Natural killer cell (primary cell): ENCODE measurements at regions of chr1 and their contacts with region 1.

Region 1: DNA sequence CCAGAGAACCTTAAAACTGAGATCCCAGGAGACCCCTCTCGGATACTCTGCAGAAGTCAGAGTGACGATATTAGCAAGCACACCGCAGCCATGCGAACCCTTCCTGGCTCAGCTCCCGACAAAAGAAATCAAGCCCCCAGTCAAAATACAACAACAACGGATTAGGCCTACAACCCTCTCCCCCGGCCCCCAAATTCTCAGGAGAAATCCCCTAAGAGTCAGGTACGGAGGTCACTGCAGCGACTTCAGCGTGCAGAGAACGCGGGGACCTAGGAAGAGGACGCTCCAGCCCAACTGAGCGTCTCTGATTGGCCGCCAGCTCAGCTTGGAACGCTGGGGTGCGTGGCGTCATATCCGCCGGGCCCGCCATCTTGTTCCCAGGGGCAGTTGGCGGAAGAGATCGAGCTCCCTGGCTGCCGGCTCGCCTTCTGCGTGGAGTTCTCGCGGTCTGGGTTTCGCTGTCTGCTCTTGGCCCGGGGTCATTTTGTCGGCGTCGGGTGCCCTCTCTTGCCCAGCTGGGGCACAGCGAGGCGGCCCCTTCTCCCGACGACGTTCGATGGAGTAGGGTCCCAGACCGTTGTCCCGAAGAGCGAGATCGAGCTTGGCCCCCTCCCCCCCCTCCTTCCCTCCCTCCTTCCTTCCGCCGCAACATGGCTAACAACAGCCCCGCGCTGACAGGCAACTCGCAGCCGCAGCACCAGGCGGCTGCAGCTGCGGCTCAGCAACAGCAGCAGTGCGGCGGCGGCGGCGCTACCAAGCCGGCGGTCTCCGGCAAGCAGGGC is at the start of gene PRPF38B:
- DNase-seq: peak; percentile 93 to 96
- ATAC-seq: peak; percentile 82 to 93 (median 84)
- H3K4me3 ChIP-seq: peak within 1 kb of the TSS; percentile 86
- H3K4me3 Mint-ChIP-seq: peak within 1 kb of the TSS; percentile 97
- H3K27ac ChIP-seq: peak within 1 kb of the TSS; percentile 99
- H3K27ac Mint-ChIP-seq: peak within 1 kb of the TSS; percentile 98 to 100
- H3K4me1 ChIP-seq: peaks cover 15% of the 10 kb centered on the region
- H3K4me1 Mint-ChIP-seq: peaks cover 47 to 53% of the 10 kb centered on the region in 2 donors
- H3K27me3 ChIP-seq: no peaks in the 10 kb centered on the region
- H3K27me3 Mint-ChIP-seq: no peaks in the 10 kb centered on the region
- CTCF ChIP-seq: no peak
- total RNA-seq, gene PRPF38B: 115 to 158 (median 156) TPM

Region 2: DNA sequence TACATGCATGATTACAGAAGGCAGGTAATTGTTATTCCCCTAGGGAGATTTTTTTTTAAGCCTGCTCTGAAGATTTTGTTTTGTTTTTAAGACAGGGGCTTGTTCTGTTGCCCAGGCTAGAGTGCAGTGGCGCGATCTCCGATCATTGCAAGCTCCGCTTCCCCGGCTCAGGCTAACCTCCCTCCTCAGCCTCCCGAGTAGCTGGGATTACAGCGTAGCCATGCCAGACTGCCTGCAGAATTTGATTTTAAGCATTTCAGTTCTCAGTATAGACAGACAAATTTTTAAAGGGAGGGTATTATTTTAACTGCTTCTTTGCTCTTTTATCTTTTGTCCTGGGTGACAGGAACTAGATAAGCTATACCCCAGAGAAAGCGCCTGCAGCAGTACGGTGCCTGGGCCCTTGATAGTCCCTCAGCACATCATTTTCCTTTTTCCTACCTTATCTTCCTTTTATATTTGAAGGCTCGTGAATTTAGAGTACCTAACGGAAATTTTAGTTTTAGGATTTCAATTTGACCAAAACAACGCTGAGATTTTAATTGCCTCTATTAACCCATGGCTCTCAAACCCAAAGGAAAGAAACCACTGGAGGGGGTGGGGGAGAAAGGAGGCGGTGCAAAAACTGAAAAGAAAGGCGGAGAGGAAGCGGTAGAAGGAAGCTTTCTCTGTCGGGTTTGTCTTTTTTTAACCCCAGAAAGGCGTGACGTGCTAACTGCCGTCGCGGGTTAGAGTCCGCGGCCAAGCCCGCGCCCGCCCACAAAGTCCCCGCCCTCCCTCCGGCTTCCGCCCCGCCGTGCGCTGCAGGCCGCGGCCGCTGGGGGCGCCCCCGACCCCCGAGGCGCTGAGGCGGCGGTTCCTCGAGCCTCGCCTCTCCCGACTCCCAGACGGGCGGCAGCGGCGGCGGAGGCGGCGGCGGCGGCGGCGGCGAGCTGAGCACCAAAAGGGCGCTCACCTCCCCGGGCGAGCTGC is 132.6 kb before region 1 on chr1 and contains the start of gene EEIG2:
- intact Hi-C with region 1: loop called (anchors 5 kb)
- DNase-seq: peak; percentile 85 to 95
- ATAC-seq: peak; percentile 88 to 95 (median 91)
- H3K4me3 ChIP-seq: peak within 1 kb of the TSS; percentile 74
- H3K4me3 Mint-ChIP-seq: peak within 1 kb of the TSS; percentile 95
- H3K27ac ChIP-seq: peak within 1 kb of the TSS; percentile 52
- H3K27ac Mint-ChIP-seq: peak within 1 kb of the TSS; percentile 86 to 88
- H3K4me1 ChIP-seq: peaks cover 28% of the 10 kb centered on the region
- H3K4me1 Mint-ChIP-seq: peaks cover 30% of the 10 kb centered on the region in 2 donors
- H3K27me3 ChIP-seq: no peaks in the 10 kb centered on the region
- H3K27me3 Mint-ChIP-seq: no peaks in the 10 kb centered on the region
- CTCF ChIP-seq: peak; percentile 74
- total RNA-seq, gene EEIG2: 18.2 to 23.9 (median 20.3) TPM

Region 3: DNA sequence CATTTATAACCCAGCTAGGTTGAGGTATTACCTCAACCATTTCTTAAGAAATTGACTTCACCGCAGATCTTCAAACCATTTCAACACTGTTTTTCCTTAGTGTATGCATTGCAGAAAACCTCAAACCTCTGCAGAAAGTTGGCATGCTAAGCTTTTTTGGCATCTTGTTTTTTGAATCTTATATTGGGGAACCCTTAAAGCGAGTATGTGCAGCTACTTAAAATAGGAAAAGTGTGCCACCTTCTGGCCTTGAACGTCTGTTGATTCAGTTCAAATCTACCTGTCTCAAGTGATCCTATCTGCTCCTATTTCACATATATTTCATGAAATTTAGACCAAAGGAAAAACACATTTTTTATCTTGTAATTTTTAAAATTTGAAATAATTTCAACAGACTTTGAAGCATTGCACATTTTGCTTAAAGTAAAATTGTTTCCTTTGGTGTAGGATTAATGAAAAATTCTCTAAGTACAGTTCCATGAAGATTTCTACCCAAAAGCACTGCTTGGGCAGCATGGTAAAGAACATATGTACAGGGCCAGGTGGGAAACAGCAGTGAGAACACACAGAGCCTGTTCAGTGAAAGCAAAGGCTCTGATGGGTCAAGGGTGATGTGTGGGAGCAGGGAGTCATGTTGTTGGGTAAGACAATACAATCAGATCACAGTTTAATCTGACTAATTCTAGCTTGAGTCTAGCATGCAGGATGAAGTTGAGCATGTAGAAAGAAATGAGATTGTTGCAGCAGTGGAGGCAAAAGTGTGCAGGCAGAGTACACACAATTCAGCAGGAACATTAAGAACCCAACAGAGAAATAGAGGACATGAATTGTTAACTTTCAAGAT is 48.4 kb before region 1 on chr1:
- intact Hi-C with region 1: loop called (anchors 1 kb)
- DNase-seq: peak in 1 of 2 donors; percentile 86
- ATAC-seq: no peak
- H3K4me3 ChIP-seq: no peak overlapping the region
- H3K4me3 Mint-ChIP-seq: peak overlapping the region; percentile 57
- H3K27ac ChIP-seq: peak overlapping the region; percentile 96
- H3K27ac Mint-ChIP-seq: peak overlapping the region; percentile 98
- H3K4me1 ChIP-seq: peaks cover 72% of the 10 kb centered on the region
- H3K4me1 Mint-ChIP-seq: peaks cover 78 to 79% of the 10 kb centered on the region in 2 donors
- H3K27me3 ChIP-seq: no peaks in the 10 kb centered on the region
- H3K27me3 Mint-ChIP-seq: no peaks in the 10 kb centered on the region
- CTCF ChIP-seq: peak; percentile 69

Region 4: DNA sequence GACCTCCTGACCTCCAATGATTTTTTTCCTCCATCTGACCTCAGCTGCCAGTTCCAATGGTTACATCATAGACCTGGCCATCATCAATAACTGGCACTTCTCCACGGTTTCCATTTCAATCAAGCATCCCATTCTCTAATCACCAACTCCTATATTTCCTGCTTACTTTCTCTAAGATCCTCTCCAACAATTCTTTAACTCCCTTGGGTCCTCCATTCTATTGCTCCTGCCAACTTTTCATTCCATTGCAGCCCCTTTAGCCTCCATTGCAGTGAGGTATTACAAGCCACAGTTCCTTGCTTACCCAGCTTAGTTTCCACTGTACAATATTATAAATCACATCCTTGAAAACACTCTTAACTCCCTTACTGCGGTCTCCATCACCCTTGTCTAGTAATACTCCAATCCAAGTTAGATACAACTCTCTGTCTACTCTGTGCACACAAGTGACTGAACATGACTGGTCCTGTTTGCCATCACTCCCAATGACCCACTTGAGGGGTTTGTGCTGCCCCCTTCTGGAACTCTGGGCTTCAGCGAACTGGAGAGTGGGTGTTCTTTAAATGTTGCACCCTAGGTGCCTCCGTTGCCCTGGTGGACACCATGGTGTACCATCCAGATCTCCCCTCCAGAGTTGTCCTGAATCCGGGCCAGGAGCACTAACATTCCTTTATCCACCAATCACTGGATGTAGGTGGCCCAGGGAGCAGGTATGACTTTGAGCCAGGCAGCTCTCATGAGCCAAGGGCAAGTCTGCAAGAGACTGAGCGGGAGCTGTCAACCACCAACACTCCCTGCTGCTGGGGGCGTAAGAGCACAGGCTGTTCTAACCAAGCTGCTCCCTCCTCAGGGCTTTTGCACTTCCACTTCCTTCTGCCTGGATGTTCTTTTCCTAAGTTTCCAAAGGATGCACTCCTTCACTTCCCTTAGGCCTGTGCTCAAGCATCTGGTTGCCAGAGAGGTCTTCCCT is 16.8 kb after region 1 on chr1:
- intact Hi-C with region 1: loop called (anchors 2 kb)
- DNase-seq: peak; percentile 48 to 81
- ATAC-seq: peak; percentile 72 to 90 (median 87)
- H3K4me3 ChIP-seq: no peak overlapping the region
- H3K4me3 Mint-ChIP-seq: no peak overlapping the region
- H3K27ac ChIP-seq: no peak overlapping the region
- H3K27ac Mint-ChIP-seq: peak overlapping the region in 1 of 2 donors; percentile 35
- H3K4me1 ChIP-seq: peaks cover 11% of the 10 kb centered on the region
- H3K4me1 Mint-ChIP-seq: peaks cover 17 to 25% of the 10 kb centered on the region in 2 donors
- H3K27me3 ChIP-seq: no peaks in the 10 kb centered on the region
- H3K27me3 Mint-ChIP-seq: no peaks in the 10 kb centered on the region
- CTCF ChIP-seq: peak; percentile 53

Region 5: DNA sequence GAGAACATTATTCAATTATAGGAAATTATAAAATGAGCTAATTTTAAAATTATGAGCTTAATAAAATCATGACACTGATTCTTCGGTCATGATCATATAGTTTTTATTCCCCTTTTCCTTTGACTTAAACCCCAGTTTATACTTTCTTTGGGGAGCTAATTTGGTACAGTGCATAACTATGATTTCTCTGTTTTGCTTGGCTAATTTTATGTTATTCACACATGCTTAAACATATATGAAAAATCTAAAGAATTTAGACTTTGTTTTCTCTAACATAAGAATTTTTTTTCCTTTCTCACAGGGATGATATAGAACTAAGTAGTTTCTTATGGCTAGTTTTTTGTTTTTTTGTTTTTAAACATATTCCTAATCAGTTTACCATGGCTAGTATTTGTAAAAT is 106.9 kb after region 1 on chr1:
- intact Hi-C with region 1: no loop called
- DNase-seq: no peak
- ATAC-seq: no peak
- H3K4me3 ChIP-seq: no peak overlapping the region
- H3K4me3 Mint-ChIP-seq: no peak overlapping the region
- H3K27ac ChIP-seq: no peak overlapping the region
- H3K27ac Mint-ChIP-seq: no peak overlapping the region
- H3K4me1 ChIP-seq: no peaks in the 10 kb centered on the region
- H3K4me1 Mint-ChIP-seq: no peaks in the 10 kb centered on the region
- H3K27me3 ChIP-seq: no peaks in the 10 kb centered on the region
- H3K27me3 Mint-ChIP-seq: no peaks in the 10 kb centered on the region
- CTCF ChIP-seq: no peak

Region 6: DNA sequence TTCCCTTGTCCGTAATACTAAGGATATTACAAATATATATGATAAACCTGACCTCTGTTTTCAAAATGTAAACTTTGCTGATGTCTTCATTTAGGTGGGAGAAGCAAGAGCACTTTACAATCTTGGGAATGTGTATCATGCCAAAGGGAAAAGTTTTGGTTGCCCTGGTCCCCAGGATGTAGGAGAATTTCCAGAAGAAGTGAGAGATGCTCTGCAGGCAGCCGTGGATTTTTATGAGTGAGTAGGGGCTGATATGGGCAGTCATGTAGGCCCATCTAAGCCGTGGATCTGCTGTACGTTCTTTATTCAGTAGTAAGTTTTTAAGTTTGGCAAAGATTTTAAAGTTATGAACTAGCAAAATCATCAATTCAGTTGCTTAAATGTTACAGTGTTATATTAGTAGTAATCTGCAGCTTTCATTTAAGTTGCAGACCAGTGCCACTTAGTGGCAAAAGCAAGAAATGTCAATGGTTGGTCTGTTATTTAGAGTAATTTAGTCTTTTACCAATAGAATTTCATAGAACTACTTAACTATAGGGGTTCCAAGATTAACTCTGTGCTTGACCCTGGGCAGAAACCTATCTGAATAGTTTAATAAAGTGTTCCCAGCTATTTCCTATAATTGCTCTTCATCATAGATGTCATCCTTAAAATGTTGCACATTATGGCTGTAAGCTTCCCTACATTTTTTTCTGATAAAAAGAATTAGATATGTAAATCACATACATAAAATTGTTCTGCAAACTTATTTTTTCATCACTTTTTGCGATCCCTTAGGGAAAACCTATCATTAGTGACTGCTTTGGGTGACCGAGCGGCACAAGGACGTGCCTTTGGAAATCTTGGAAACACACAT is 206.0 kb after region 1 on chr1:
- intact Hi-C with region 1: loop called (anchors 1 kb)
- DNase-seq: peak in 1 of 2 donors; percentile 72
- ATAC-seq: peak; percentile 83 to 91 (median 89)
- H3K4me3 ChIP-seq: no peak overlapping the region
- H3K4me3 Mint-ChIP-seq: no peak overlapping the region
- H3K27ac ChIP-seq: no peak overlapping the region
- H3K27ac Mint-ChIP-seq: no peak overlapping the region
- H3K4me1 ChIP-seq: no peaks in the 10 kb centered on the region
- H3K4me1 Mint-ChIP-seq: no peaks in the 10 kb centered on the region
- H3K27me3 ChIP-seq: no peaks in the 10 kb centered on the region
- H3K27me3 Mint-ChIP-seq: no peaks in the 10 kb centered on the region
- CTCF ChIP-seq: peak; percentile 76

Region 7: DNA sequence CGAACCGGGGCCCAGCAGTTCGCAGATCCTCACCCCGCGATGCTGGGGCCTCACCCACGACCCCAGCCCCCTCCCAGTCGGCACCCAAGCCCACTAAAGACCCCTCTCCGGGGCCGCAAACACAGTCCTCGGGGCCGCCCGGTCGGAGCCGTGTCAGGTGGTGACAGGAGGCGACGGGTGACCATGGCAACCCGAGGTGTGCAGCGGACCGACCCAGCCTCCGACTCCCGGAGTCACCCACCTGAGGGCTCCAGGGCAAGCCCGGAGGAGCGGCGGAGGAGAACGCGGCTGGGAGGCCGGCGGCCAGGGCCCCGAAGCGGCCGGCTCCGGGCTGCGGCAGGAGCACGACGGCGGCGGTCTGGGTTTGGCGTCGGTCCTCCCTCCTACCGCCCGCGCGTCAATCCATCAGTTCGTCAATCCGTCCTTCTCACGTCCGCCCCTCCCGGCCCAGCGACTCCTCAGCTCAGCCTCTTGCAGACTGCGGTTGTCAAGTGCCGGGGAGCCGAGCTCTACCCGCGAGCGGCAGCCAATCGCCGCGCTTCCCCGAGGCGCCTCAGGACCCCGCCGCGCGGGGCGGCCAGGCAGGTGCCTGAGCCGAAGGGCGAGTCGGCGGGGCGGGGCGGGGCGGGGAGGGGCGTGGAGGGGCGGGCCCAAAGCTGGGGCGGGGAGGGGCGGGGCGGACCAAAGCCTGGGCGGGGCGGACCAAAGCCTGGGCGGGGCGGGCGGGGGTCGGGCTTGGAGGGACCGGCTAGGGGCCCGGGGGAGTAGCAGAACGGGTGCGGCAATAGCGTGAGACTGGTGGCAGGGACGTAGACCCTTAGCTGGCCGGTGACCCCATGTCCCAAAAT is 349.7 kb after region 1 on chr1 and contains the start of gene WDR47:
- intact Hi-C with region 1: loop called (anchors 1 kb)
- DNase-seq: peak; percentile 95 to 98
- ATAC-seq: peak; percentile 96 to 99 (median 97)
- H3K4me3 ChIP-seq: peak within 1 kb of the TSS; percentile 90
- H3K4me3 Mint-ChIP-seq: peak within 1 kb of the TSS; percentile 91
- H3K27ac ChIP-seq: peak within 1 kb of the TSS; percentile 82
- H3K27ac Mint-ChIP-seq: peak within 1 kb of the TSS; percentile 79 to 90
- H3K4me1 ChIP-seq: peaks cover 13% of the 10 kb centered on the region
- H3K4me1 Mint-ChIP-seq: peaks cover 14% of the 10 kb centered on the region in 2 donors
- H3K27me3 ChIP-seq: no peaks in the 10 kb centered on the region
- H3K27me3 Mint-ChIP-seq: no peaks in the 10 kb centered on the region
- CTCF ChIP-seq: no peak
- total RNA-seq, gene WDR47: 15.7 to 21.3 (median 17.2) TPM